ENCODE measurements at regions of chr1 and their contacts with region 1.

Region 1: DNA sequence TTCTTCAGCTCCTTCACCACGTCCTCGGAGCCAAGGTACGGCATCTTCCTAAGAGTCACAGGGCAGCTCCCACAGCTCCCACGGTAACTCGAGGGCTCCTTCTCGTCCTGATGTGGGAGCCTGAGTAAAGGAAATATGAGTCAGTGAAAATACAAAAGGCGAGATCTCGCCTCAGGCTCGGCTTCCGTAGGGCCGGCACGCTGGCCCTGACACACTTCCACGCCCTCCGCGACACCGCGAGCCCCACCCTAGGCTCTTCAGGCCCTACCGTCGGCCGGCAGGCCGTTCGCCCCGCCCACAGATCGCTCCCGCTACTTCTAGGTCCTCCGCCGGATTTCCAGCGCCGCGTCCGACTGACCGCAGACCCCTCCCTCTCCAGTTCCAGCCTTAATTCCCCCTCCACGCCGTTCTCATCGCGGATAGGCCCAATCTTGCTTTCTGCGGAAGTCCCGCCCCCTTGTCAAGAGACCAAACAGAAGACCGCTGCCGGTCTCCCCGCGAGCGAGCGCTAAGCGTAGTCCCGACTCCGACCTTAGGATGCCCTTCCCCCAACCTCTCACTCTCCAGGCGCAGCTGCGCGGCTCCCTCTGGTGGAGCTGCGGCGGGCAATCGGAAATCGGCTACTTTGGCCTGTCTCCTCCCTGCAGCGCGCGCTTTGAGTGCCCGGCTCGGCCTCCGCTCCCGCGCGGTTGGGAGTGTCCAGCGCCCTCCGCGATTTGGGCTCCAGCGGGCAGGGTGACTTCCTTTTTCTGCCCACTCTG is at the starts of genes AP4B1 and DCLRE1B:
- DNase-seq: peak; percentile 99
- H3K4me3 Mint-ChIP-seq: peak within 1 kb of the TSS; percentile 99
- H3K27ac Mint-ChIP-seq: peak within 1 kb of the TSS; percentile 97
- H3K4me1 Mint-ChIP-seq: peaks cover 51% of the 10 kb centered on the region
- H3K27me3 Mint-ChIP-seq: no peaks in the 10 kb centered on the region
- total RNA-seq, gene AP4B1: 35.7 to 40.2 TPM
- total RNA-seq, gene DCLRE1B: 17.7 to 18.3 TPM

Region 2: GRCh38 chr1:113133038-113133437 is 771.8 kb before region 1 on chr1:
- CTCF ChIA-PET with region 1: no interaction called
- intact Hi-C with region 1: loop called (anchors 10 kb)
- DNase-seq: peak; percentile 69
- H3K4me3 Mint-ChIP-seq: no peak overlapping the region
- H3K27ac Mint-ChIP-seq: peak overlapping the region; percentile 76
- H3K4me1 Mint-ChIP-seq: peaks cover 64% of the 10 kb centered on the region
- H3K27me3 Mint-ChIP-seq: no peaks in the 10 kb centered on the region

Region 3: GRCh38 chr1:113759333-113760101 is 145.3 kb before region 1 on chr1 and contains the start of gene PHTF1:
- CTCF ChIA-PET with region 1: interaction called, 3 read pairs
- intact Hi-C with region 1: loop called (anchors 1 kb)
- DNase-seq: peak; percentile 63
- H3K4me3 Mint-ChIP-seq: peak within 1 kb of the TSS; percentile 92
- H3K27ac Mint-ChIP-seq: peak within 1 kb of the TSS; percentile 96
- H3K4me1 Mint-ChIP-seq: peaks cover 14% of the 10 kb centered on the region
- H3K27me3 Mint-ChIP-seq: no peaks in the 10 kb centered on the region
- total RNA-seq, gene PHTF1: 5.4 to 6.3 TPM

Region 4: GRCh38 chr1:113769601-113769970 is 135.3 kb before region 1 on chr1:
- CTCF ChIA-PET with region 1: no interaction called
- intact Hi-C with region 1: no loop called
- DNase-seq: no peak
- H3K4me3 Mint-ChIP-seq: no peak overlapping the region
- H3K27ac Mint-ChIP-seq: no peak overlapping the region
- H3K4me1 Mint-ChIP-seq: peaks cover 32% of the 10 kb centered on the region
- H3K27me3 Mint-ChIP-seq: no peaks in the 10 kb centered on the region

Region 5: DNA sequence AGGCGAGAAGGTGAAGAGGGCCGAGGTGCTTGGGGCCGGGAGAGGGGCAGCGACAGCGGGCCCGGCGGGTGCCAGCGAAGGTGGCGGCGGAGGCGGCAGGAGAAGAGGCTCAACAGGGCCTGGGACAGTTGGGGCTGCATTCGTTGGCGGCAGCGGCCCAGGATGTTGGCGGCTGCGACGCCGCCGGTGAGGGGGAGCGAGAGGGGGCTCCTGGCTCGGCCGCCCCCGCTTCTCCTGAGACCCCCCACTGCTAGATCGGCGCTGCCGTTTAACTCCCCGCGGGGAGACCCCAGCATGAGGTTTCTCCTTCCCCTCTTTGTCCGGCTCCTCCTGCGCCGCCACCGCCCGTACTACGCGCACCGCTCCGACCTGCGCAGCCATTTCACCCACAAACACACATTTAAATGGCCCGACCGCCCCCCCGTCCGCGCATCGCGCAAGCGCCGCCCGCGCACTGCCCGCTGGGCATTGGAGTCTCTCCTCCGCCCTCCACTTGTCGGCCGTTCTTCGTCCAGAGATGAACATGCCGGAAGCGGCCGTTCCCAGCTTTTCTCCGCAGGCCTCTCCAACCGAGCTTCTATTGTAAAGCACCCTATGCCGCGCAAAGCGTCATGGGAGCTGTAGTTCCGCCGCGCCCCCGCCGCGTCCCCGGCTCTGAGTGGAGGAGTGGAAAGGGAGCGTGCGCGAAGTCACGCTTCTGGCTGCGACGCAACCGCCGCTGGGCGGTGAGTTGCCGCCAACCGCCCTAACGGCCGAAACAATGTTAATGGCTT is 92.8 kb before region 1 on chr1 and contains the start of gene RSBN1:
- CTCF ChIA-PET with region 1: no interaction called
- intact Hi-C with region 1: loop called (anchors 1 kb)
- DNase-seq: peak; percentile 99
- H3K4me3 Mint-ChIP-seq: peak within 1 kb of the TSS; percentile 98
- H3K27ac Mint-ChIP-seq: peak within 1 kb of the TSS; percentile 94
- H3K4me1 Mint-ChIP-seq: peaks cover 31% of the 10 kb centered on the region
- H3K27me3 Mint-ChIP-seq: no peaks in the 10 kb centered on the region
- total RNA-seq, gene RSBN1: 13.6 to 14.3 TPM

Region 6: GRCh38 chr1:113835642-113836307 is 69.1 kb before region 1 on chr1:
- CTCF ChIA-PET with region 1: interaction called, 24 read pairs
- intact Hi-C with region 1: loop called (anchors 1 kb)
- DNase-seq: peak; percentile 35
- H3K4me3 Mint-ChIP-seq: no peak overlapping the region
- H3K27ac Mint-ChIP-seq: no peak overlapping the region
- H3K4me1 Mint-ChIP-seq: peaks cover 3% of the 10 kb centered on the region
- H3K27me3 Mint-ChIP-seq: no peaks in the 10 kb centered on the region